ENCODE measurements at regions of chr14 and their contacts with region 1.

Region 1: GRCh38 chr14:24195191-24196070 is at the start of gene TM9SF1:
- DNase-seq: peak; percentile 84
- H3K4me3 Mint-ChIP-seq: peak within 1 kb of the TSS; percentile 98
- H3K27ac Mint-ChIP-seq: peak within 1 kb of the TSS; percentile 97
- H3K4me1 Mint-ChIP-seq: peaks cover 38% of the 10 kb centered on the region
- H3K27me3 Mint-ChIP-seq: no peaks in the 10 kb centered on the region
- total RNA-seq, gene TM9SF1: 27.8 and 30.8 TPM in 2 replicates

Region 2: GRCh38 chr14:24123508-24124417 is 71.7 kb before region 1 on chr14:
- intact Hi-C with region 1: no loop called
- DNase-seq: no peak
- H3K4me3 Mint-ChIP-seq: no peak overlapping the region
- H3K27ac Mint-ChIP-seq: no peak overlapping the region
- H3K4me1 Mint-ChIP-seq: peaks cover 5% of the 10 kb centered on the region
- H3K27me3 Mint-ChIP-seq: no peaks in the 10 kb centered on the region

Region 3: DNA sequence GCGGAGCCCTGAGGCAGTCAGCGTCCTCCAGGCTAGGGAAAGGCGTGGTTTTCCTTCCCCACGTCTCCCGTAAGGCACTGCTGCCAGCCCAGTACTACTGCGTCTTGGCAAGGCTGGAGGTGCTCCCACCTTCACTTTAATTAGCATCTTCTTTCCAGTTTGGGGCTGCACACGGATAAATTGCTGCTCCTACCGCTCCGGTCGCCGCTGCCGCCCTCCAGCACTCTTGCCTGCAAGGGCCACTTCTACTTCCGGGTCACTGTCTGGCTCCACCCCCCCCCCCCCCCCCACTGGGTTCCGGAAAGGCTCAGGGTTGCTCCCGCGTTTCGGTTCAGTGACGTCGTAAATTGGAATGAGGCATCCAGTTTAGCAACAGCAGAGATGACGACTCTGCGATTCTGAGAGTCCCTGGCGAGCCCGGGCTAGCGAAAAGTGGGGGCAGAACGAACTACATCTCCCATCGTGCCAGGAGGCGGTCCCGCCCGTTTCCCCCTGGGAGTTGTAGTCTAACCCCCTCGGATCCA is 36.8 kb after region 1 on chr14 and contains the start of gene NEDD8:
- intact Hi-C with region 1: loop called (anchors 1 kb)
- DNase-seq: peak; percentile 89
- H3K4me3 Mint-ChIP-seq: peak within 1 kb of the TSS; percentile 97
- H3K27ac Mint-ChIP-seq: peak within 1 kb of the TSS; percentile 91
- H3K4me1 Mint-ChIP-seq: peaks cover 44% of the 10 kb centered on the region
- H3K27me3 Mint-ChIP-seq: no peaks in the 10 kb centered on the region
- total RNA-seq, gene NEDD8: 194 and 202 TPM in 2 replicates

Region 4: DNA sequence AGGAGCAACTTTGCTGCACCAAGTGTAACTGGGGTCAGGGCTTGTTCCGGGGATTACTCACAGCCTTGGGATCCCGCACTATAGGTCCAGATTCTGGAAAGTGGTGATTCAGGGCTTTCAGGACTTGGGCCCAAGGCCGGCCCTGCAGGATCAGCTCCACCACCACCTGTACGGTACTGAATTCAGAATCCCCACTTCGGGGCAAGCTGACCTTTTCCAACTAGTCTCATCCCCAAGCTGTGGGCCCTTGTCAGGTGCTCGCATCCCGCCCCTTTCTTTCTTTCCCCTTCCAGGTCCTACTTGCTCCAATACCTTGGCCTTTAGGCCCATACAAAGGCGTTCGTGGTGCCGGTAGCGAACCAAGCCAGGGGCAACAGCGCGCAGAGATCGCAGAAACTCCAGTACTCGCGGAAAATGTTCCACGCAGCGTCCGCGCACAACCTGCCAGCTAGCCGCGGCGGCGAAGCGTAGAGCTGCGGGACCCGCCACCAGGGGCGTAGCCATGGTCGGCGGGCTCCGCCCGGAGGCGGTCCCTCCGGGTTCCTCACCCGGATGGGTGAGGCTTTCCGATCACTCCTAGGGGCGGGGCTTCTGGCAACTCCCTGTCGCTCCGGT is 46.5 kb after region 1 on chr14:
- intact Hi-C with region 1: loop called (anchors 2 kb)
- DNase-seq: peak; percentile 93
- H3K4me3 Mint-ChIP-seq: peak overlapping the region; percentile 86
- H3K27ac Mint-ChIP-seq: peak overlapping the region; percentile 98
- H3K4me1 Mint-ChIP-seq: peaks cover 46% of the 10 kb centered on the region
- H3K27me3 Mint-ChIP-seq: no peaks in the 10 kb centered on the region

Region 5: DNA sequence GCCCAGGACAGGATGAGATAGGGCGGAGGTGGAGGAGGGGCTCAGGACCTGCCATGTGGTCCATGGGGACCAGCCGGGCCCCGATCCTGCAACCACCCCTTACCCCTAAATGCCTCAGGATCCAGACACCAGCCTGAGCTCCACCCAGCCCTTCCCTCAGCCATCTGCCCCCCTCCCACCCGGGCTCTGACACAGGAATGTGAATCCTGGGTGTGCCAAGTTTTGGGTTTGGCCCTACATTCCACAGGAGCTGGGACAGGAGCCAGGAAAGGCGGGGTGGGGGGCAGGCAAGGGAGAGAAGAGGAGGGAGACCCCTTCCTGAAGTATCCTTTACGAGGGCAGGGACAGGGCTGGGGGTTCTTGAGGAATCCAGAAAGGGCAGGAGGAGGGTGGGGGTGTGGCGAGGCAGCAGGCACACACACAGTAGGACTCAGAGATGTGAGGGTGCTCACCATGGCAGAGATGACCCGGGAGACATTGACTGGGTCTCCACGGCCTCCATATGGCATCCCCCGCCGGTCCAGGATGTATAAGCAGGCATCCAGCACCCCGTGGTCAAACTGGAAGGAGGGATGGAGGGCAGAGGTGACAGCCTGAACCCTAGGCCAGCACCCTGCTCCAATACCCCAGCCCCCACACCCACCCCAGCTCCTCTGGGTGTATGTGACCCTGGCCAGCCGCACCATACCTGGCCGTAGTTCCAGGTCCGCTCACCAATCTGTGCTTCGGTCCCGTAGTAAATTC is 64.0 kb after region 1 on chr14:
- intact Hi-C with region 1: no loop called
- DNase-seq: no peak
- H3K4me3 Mint-ChIP-seq: no peak overlapping the region
- H3K27ac Mint-ChIP-seq: no peak overlapping the region
- H3K4me1 Mint-ChIP-seq: no peaks in the 10 kb centered on the region
- H3K27me3 Mint-ChIP-seq: no peaks in the 10 kb centered on the region

Region 6: GRCh38 chr14:24339284-24340151 is 144.1 kb after region 1 on chr14 and contains the start of gene RIPK3:
- intact Hi-C with region 1: no loop called
- DNase-seq: peak; percentile 68
- H3K4me3 Mint-ChIP-seq: peak within 1 kb of the TSS; percentile 87
- H3K27ac Mint-ChIP-seq: peak within 1 kb of the TSS; percentile 61
- H3K4me1 Mint-ChIP-seq: peaks cover 16% of the 10 kb centered on the region
- H3K27me3 Mint-ChIP-seq: peaks cover 24% of the 10 kb centered on the region
- total RNA-seq, gene RIPK3: 13.2 and 15.4 TPM in 2 replicates